ENCODE measurements at regions of chr9 and their contacts with region 1.

Region 1: DNA sequence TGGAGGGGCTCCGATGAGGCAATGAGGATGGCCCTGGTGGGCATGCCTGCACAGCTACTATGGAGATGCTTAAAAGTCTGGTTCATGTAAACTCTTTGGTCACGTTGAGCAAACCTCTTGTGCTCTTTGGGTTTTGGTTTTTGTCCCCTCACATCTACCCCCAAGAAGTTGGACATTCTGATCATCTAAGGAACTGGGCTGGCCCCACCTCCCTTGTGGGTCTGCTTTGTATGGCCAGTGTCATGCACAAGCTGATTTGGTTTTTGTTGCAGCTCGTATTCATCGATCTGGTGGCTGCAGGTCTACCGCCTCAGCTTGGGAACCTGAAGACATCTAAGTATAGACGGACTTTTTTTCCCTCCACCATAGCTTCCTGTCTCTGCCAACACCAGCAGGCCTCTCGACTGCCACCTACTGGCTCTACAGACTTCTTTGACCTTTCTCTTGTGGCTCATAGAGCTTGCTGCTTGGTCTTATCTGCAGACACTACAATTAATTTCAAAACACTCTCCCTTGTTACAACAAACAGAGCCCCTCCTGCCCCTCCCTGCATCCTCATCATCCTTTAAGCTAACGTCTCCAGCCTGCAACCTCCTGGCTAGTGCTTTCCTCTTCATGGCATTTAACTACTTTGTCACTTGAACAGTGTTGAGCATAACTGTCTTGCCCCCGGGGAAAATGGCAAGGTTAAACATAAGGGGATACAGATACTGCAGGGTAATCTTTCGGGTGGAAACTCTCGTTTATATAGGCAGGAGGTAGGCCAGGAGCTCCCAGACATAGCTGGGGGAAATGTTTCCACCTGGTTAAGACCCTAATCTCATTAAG is 34.5 kb downstream of the TSTD2 start:
- DNase-seq: peak; percentile 74

Region 2: DNA sequence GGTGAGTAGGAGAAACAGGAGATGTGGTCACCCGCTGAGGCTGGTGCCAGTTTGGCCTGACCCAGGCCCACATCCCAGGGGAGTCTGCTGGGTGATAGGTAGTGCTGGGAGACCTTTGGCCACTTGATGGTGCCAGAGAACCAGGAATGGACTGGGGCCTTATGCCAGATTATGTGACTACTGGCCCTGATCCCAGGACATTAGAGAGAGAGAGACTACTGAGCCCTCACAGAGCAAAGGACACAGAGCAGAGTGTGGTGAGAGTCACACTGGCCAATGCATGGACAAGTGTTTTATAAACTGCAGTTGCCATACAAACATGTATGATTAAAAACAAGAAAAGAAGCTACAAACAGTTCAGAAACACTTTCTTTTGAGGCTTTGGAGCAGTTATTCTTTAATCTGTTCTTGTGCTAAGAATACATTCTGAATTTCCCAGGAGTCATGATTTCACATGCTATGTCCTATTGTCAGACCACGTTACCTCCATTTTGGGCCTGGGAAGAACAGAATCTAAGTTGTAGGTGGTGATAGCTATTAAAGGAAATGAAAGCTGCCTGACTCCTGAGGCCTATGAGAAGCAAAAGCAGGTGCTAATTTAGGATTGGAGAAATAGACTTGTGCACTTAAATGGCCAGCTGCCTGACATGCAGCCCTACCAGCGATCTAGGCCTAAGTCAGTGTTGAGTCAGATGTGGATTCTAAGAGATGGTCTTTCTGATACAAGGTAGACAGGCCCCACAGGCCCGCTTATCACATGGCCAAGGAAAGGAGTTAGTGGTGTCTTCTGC is 129.8 kb before region 1 on chr9:
- CTCF ChIA-PET with region 1: interaction called, 55 read pairs
- POLR2A ChIA-PET with region 1: no interaction called
- DNase-seq: peak; percentile 81

Region 3: DNA sequence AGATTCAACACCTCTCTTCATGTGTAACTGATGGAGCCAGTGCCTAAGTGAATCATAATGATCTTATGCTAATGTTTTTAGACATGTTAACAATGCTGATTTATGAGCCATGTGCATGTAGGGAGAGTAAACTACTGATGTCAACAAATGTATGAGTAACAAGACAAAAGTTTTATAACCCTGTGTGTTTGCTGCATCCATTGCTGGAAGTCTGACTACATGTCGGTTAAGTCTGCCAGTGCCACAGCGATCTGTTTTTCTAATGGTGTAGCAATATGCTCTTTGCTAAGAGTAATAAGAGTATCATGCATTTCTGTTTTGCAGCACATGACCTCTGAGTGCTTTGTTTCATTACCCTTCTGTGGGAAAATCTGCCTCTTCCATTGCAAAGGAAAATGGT is 123.6 kb before region 1 on chr9:
- CTCF ChIA-PET with region 1: interaction called, 55 read pairs
- POLR2A ChIA-PET with region 1: no interaction called
- DNase-seq: no peak

Region 4: GRCh38 chr9:97501177-97501971 is 97.3 kb before region 1 on chr9 and contains the start of gene TMOD1:
- CTCF ChIA-PET with region 1: interaction called, 14 read pairs
- POLR2A ChIA-PET with region 1: no interaction called
- DNase-seq: peak; percentile 89

Region 5: DNA sequence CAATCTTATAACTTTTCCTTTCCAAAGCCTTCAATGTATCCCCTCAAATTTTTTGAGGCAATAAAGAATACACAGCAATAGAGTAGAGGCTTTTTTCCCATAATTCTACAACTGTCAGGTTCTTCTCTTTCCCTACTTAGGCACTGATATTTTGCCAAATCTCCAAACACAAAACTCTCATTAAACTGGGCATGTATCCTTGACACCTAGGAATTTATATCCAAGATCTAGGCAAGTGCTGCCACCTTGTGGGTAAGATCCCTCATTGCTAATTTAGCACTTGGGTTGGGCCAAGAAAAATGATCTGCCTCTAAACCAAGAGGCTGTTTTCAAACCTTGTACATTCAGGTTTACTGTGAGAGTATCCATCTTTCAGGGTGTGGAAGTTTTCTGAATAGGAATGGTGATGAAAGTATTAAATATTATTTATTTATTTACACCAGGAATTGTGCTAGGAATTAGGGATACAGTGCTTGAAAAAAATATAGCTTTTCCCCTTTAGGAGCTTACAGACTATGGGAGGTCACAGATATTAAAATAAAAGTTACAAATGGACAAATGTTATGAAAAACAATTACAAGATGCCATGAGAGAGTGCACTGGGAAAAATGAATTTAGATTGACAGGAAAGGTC is 16.9 kb after region 1 on chr9:
- CTCF ChIA-PET with region 1: interaction called, 11 read pairs
- POLR2A ChIA-PET with region 1: no interaction called
- DNase-seq: peak; percentile 66

Region 6: GRCh38 chr9:97688654-97689053 is 90.0 kb after region 1 on chr9:
- CTCF ChIA-PET with region 1: no interaction called
- POLR2A ChIA-PET with region 1: no interaction called
- DNase-seq: no peak